ENCODE measurements at regions of chr1 and their contacts with region 1.

Region 1: DNA sequence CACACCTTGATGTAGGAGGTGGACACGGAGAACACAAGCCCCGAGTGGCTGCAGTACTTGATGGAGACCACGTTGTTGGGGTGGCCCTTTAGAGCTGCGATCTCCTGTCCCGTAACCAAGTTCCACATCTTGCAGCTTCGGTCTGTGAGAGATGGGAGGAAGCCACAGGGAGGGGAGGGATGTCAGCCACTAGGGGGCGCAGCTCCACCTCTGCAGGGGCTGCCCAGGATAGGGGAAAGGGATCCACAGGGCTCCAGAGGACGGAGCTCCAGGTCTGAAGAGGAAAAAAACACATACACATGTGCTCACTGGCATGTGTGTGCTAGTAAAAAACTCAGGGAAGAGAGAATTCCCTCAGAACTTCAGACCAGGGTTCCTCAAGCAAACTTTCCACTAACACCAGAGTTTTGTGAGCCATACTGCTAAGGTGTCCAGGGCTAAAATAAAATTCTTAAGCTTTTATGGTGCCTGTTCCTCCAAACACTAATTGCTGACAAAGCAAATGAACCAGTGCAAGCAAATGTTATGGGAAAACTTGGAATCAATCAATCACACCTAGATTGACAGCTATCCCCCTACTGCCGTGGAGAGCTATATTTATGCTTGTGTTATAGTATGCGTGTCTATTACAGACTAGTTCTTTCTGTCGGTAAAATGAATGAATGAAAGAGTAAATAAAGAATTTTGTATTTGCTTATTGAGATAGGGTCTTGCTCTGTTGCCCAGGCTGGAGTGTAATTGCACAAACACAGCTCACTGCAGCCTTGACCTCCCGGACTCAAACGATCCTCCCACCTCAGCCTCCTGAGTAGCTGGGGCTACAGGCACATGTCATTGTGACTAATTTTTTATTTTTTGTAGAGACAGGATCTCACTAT is 43.7 kb downstream of the KIF21B start:
- DNase-seq: no peak
- H3K4me3 ChIP-seq: no peak overlapping the region
- H3K27ac ChIP-seq: no peak overlapping the region
- H3K27me3 ChIP-seq: no peaks in the 10 kb centered on the region
- CTCF ChIP-seq: peak; percentile 46; the same call in 1 of the 2 replicates

Region 2: DNA sequence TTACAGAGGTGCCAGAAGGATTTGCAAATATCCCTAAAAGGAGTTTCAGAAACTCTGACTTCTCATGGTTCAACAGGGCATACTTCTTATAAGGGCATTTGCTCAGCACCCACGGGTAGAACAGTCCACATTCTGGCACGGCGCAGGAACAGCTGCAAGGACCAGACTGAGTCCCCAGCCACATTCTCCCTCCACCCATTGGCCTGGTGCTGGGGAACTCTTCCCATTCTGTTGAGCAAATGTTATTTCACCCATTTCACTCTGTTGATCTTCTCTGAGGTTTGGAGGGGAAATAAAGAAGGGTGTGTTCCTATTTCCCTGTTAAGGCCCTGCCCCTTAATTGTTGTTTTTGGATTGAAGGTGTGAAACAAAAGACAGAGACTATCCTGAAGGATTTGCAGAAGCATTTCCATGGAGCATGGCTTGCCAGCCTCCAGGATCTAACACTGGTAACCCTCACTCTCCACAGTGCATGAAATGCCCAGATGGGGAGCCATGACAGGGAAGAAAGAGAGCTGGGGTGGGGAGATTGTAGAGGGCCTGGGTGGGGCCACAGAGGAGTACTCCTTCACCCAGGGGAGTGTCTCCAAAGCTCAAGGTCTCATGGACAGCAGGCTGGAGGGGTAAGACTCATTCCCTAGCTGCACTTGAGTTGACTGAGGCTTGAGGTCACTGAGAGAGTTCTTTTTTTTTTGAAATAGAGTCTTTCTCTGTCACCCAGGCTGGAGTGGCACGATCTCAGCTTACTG is 50.1 kb before region 1 on chr1:
- CTCF ChIA-PET with region 1: no interaction called
- POLR2A ChIA-PET with region 1: no interaction called
- DNase-seq: no peak
- H3K4me3 ChIP-seq: no peak overlapping the region
- H3K27ac ChIP-seq: no peak overlapping the region
- H3K27me3 ChIP-seq: peaks cover 14% of the 10 kb centered on the region
- CTCF ChIP-seq: no peak

Region 3: GRCh38 chr1:201114236-201115131 is 134.7 kb after region 1 on chr1:
- CTCF ChIA-PET with region 1: interaction called, 13 read pairs
- POLR2A ChIA-PET with region 1: no interaction called
- DNase-seq: peak; percentile 61
- H3K4me3 ChIP-seq: peak overlapping the region; percentile 66
- H3K27ac ChIP-seq: no peak overlapping the region
- H3K27me3 ChIP-seq: peaks cover 48% of the 10 kb centered on the region
- CTCF ChIP-seq: peak; percentile 90